ENCODE measurements at regions of chr12 and their contacts with region 1.

Region 1: DNA sequence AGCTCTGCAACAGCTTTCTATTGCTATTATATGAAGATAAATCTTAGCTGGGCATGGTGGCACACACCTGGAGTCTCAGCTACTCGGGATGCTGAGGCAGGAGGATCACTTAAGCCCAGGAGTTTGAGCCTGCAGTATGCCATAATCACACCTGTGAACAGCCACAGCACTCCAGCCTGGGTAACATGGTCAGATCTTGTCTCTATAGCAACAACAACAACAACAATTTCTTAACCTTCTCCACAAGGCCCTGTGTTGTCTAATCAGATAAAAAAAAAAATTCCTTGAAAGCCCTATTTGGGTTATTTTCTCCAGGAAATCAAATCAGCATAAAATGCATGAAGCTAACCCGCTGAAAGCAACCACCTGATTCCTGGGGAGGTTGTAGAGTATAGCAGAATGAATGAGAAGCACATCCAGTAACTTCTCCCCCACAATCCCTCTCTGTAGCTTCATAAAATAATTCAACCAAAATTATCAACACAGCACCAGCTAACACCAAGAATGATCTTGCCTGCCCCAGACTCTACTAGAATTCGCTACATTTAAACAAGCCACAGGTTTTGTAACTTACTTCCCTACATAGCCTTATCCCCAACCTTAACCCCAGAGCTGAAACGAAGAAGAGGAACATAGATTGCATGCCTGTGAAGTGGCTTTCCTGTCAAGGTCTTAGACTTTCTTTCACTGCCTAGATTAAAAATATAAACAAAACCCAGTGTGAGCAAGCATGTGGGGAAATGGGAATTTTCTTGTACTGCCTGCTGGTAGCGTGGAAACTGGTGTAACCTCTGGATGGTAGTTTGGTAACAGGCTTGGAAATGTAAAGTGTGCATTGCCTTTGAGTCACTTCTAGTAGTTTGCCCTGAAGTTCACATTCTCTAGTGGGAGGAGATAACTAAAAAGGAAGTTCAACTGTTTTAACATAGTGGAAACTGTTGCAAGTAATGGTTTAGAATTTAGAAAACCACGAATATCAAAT is 6.0 kb upstream of the STK38L start:
- DNase-seq: peak; percentile 72
- ATAC-seq: peak; percentile 82
- H3K4me3 ChIP-seq: peak overlapping the region; percentile 31
- H3K27ac ChIP-seq: peak overlapping the region; percentile 82
- H3K4me1 ChIP-seq: peaks cover 32% of the 10 kb centered on the region
- H3K27me3 ChIP-seq: no peaks in the 10 kb centered on the region
- CTCF ChIP-seq: no peak
- EP300 ChIP-seq: peak in 1 of 2 experiments; percentile 40; a peak in 1 of 4 replicates
- POLR2A ChIP-seq: no peak
- RAD21 ChIP-seq: peak; percentile 7; the same call in 1 of the 2 replicates

Region 2: DNA sequence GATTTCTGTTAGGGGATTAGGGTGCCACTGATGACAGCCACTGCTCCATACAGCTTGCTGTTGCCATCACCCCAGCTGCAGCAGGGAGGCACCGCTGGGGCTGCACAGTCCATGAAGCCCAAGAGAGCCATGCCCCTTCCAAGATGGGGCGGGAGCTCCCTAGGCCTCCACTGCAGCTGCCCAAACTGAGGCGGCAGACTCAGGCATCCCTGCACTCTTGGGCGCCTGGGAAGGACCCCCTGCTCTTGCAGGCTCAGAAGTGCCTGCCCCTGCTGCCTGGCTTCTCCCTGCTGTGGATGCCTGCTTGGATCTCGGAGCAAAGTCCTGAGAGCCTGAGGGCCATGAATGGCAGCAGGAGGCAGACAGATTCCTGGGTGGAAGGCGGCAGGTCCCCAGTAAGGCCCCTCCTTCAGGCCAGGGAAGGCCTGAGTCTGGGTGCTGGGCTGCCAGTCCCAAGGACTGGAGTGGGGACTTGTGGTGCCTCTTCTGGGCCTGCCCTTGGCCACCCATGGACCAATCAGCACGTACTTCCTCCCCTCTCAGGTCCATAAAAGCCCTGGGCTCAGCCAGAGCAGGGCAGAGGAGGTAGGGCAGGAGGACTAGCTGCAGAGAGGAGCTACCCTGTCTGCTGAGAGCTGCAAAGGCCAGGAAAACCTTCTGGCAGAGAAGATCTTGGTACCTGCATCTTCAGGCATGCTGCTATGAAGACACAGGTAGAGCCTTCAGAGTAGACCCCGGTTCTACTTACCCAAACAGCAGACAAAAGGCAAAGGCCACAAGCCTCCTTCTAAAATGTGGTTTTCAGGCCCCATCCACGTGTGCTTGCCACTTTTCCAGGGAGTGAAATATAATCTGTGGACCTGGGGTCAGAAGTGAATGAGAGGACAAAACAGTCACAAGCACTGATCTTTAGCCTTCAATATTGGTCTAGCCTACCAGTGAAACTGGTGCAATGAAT is 24.0 kb before region 1 on chr12:
- CTCF ChIA-PET with region 1: interaction called, 9 read pairs
- POLR2A ChIA-PET with region 1: interaction called, 36 read pairs
- RAD21 ChIA-PET with region 1: interaction called, 71 read pairs
- SMC1A ChIA-PET with region 1: interaction called, 72 read pairs
- in situ Hi-C with region 1: no loop called
- intact Hi-C with region 1: no loop called
- DNase-seq: no peak
- ATAC-seq: no peak
- H3K4me3 ChIP-seq: no peak overlapping the region
- H3K27ac ChIP-seq: no peak overlapping the region; the same call in 1 of the 2 replicates
- H3K4me1 ChIP-seq: peaks cover 12% of the 10 kb centered on the region
- H3K27me3 ChIP-seq: no peaks in the 10 kb centered on the region
- CTCF ChIP-seq: no peak
- EP300 ChIP-seq: no peak
- POLR2A ChIP-seq: no peak
- RAD21 ChIP-seq: no peak